ENCODE measurements at regions of chr17 and their contacts with region 1.

Region 1: GRCh38 chr17:35312790-35313711 is 60.4 kb downstream of the SLFN11 start:
- DNase-seq: peak; percentile 78
- H3K4me3 Mint-ChIP-seq: peak overlapping the region; percentile 77
- H3K27ac Mint-ChIP-seq: peak overlapping the region; percentile 85
- H3K4me1 Mint-ChIP-seq: peaks cover 27% of the 10 kb centered on the region
- H3K27me3 Mint-ChIP-seq: no peaks in the 10 kb centered on the region

Region 2: GRCh38 chr17:35161281-35161761 is 151.7 kb before region 1 on chr17:
- CTCF ChIA-PET with region 1: interaction called, 3 read pairs
- intact Hi-C with region 1: loop called (anchors 5 kb)
- DNase-seq: peak; percentile 35
- H3K4me3 Mint-ChIP-seq: peak overlapping the region; percentile 47
- H3K27ac Mint-ChIP-seq: peak overlapping the region; percentile 73
- H3K4me1 Mint-ChIP-seq: peaks cover 50% of the 10 kb centered on the region
- H3K27me3 Mint-ChIP-seq: no peaks in the 10 kb centered on the region

Region 3: DNA sequence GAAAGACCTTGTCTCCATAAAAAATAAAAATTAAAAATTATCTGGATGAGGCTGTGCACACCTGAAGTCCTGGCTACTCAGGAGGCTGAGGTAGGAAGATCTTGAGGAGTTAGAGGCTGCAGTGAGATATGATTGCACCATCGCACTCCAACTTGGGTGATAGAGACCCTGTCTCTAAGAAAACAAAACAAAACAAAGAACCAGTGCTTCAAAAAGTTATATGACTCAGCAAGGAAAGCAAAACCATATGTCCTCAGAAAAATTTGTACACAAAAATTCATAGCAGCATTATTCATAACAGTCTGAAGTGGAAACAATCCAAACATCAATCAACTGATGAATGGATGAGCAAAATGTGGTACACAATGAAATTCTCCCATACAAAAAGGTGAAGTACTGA is 21.2 kb before region 1 on chr17:
- CTCF ChIA-PET with region 1: no interaction called
- intact Hi-C with region 1: no loop called
- DNase-seq: no peak
- H3K4me3 Mint-ChIP-seq: no peak overlapping the region
- H3K27ac Mint-ChIP-seq: no peak overlapping the region
- H3K4me1 Mint-ChIP-seq: peaks cover 23% of the 10 kb centered on the region
- H3K27me3 Mint-ChIP-seq: no peaks in the 10 kb centered on the region

Region 4: GRCh38 chr17:35373534-35373983 is 60.5 kb after region 1 on chr17 and contains the start of gene SLFN11:
- CTCF ChIA-PET with region 1: interaction called, 12 read pairs
- intact Hi-C with region 1: loop called (anchors 1 kb)
- DNase-seq: peak; percentile 93
- H3K4me3 Mint-ChIP-seq: peak within 1 kb of the TSS; percentile 96
- H3K27ac Mint-ChIP-seq: peak within 1 kb of the TSS; percentile 99
- H3K4me1 Mint-ChIP-seq: peaks cover 52% of the 10 kb centered on the region
- H3K27me3 Mint-ChIP-seq: no peaks in the 10 kb centered on the region
- total RNA-seq, gene SLFN11: 46.4 to 49.6 TPM

Region 5: GRCh38 chr17:35448214-35448898 is 135.3 kb after region 1 on chr17 and contains the start of gene SLFN13:
- CTCF ChIA-PET with region 1: interaction called, 9 read pairs
- intact Hi-C with region 1: loop called (anchors 1 kb)
- DNase-seq: peak; percentile 98
- H3K4me3 Mint-ChIP-seq: peak within 1 kb of the TSS; percentile 52
- H3K27ac Mint-ChIP-seq: peak within 1 kb of the TSS; percentile 13
- H3K4me1 Mint-ChIP-seq: peaks cover 12% of the 10 kb centered on the region
- H3K27me3 Mint-ChIP-seq: no peaks in the 10 kb centered on the region
- total RNA-seq, gene SLFN13: 28.6 to 30.1 TPM

Region 6: GRCh38 chr17:35531160-35531559 is 218.1 kb after region 1 on chr17:
- CTCF ChIA-PET with region 1: interaction called, 118 read pairs
- intact Hi-C with region 1: loop called (anchors 1 kb)
- DNase-seq: no peak
- H3K4me3 Mint-ChIP-seq: no peak overlapping the region
- H3K27ac Mint-ChIP-seq: no peak overlapping the region
- H3K4me1 Mint-ChIP-seq: peaks cover 72% of the 10 kb centered on the region
- H3K27me3 Mint-ChIP-seq: no peaks in the 10 kb centered on the region

Region 7: DNA sequence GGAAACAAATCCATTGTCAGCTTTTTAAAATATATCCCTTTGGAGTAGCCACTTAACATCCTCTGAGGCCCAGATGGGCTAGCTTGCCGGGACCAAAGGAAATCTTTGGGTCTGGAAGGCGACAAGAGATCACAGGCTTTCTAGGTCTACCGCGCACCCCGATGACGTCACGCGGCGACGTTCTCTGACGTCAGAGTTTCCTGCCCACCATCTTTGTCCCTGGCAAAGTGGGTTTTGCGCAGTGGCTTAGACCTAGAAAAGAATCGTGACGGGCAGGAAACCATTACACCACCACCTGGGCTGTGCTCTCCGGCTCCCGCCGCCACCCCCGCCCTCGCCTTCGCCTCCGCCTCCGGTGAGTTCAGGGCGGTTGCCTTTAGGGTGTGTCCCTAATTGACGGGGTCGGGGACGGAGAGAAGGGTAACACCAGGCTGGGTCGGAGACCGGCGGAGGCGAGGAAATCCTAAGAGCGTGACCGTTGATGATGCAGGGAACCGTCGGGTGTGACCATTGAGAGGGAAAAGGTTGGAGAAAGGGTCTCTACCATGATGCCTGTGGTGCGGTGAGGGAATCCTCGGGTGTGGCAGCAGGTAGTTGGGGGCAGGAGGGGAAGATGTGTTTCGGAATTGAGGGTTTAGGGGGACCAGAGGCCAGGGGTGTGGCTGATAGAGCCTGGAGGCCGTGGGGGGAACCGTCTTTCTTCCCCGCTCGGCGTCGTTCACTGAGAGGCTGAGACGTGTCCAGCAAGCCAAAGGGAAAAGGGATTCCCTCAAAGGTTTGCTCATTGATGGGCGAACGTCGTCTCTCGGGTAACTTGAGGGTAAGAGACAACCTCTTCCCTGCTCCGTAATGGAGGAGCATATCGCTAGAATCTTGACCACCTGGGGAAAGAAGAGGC is 274.3 kb after region 1 on chr17 and contains the start of gene AP2B1:
- CTCF ChIA-PET with region 1: interaction called, 4 read pairs
- intact Hi-C with region 1: loop called (anchors 5 kb)
- DNase-seq: peak; percentile 97
- H3K4me3 Mint-ChIP-seq: peak within 1 kb of the TSS; percentile 97
- H3K27ac Mint-ChIP-seq: peak within 1 kb of the TSS; percentile 97
- H3K4me1 Mint-ChIP-seq: peaks cover 29% of the 10 kb centered on the region
- H3K27me3 Mint-ChIP-seq: no peaks in the 10 kb centered on the region
- total RNA-seq, gene AP2B1: 158 to 172 TPM